Activated CD8-positive, alpha-beta T cell treated with anti-CD3 and anti-CD28 coated beads, Interleukin-2, amount 10 ng/mL, durations not matched to agents 7 days and 5 days (primary cell): ENCODE measurements at regions of chr11 and their contacts with region 1.

Region 1: GRCh38 chr11:128831174-128832120 is 35.6 kb downstream of the KCNJ1 start:
- DNase-seq: peak; percentile 91
- ATAC-seq: peak; percentile 85
- H3K4me3 Mint-ChIP-seq: peak overlapping the region; percentile 58
- H3K27ac Mint-ChIP-seq: peak overlapping the region; percentile 66
- H3K4me1 Mint-ChIP-seq: peaks cover 30% of the 10 kb centered on the region
- H3K27me3 Mint-ChIP-seq: peaks cover 2% of the 10 kb centered on the region

Region 2: DNA sequence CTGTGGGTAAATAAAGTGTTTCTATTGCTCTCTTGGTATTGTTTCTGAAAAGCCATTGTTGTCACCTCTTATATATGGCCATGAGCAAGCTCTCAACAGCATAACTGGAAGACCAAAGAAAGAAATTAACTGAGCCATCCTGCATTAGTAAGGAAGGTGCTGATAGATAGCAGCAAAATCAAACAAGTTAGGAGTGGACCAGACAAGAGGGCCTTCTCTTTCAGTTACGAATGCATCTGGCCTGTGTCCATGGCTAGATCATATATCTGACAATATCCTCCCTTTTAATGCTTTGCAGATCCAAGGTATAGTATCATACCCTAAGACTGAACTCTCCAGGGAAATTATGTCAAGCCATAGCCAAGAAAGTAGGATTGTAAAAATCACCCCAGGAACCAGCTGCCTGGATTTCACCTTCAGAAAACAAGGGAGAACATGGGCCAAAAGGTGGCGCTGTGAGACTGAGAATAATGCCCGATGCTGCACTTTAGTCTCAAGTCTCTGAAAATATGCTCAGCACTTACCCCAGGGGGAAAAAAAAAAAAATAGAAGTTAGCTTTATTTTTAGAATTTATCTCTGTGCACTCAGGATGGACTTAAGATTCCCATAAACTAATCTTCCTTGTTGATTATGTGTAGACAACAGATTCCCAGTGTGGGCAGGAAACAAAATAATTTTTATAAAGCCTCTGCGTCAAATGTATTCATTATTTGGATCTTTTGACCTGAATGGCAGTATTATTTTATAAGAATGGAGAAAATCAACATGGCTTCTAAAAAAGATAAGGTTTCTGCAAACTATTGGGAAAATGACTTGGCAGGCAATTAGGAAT is 659.2 kb before region 1 on chr11:
- CTCF ChIA-PET with region 1: interaction called, 52 read pairs
- POLR2A ChIA-PET with region 1: no interaction called
- DNase-seq: peak; percentile 91
- ATAC-seq: peak; percentile 86
- H3K4me3 Mint-ChIP-seq: no peak overlapping the region
- H3K27ac Mint-ChIP-seq: no peak overlapping the region
- H3K4me1 Mint-ChIP-seq: no peaks in the 10 kb centered on the region
- H3K27me3 Mint-ChIP-seq: peaks cover 11% of the 10 kb centered on the region

Region 3: DNA sequence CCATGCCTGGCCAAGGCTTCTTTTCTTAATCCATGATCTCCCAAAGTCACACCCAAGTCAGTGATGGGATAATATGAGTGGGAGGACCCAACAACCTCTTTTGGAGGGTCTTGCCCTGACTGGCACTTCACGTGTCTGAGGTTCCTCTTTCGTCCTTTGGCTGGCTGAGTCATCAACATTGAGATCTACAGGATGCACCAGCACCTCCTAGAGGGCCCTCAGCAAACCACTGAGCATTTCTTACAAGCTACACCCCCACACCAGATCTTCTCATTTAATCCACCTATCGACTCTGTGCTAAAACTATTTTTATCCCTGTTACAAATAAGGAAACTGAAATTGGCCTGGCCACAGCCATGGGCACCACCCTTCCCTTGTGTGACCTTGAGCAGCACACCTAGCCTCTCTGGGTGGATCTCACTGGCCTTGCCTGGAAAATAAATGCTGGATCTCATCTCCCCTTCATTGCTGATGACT is 74.2 kb before region 1 on chr11:
- CTCF ChIA-PET with region 1: interaction called, 20 read pairs
- POLR2A ChIA-PET with region 1: no interaction called
- DNase-seq: peak; percentile 84
- ATAC-seq: peak; percentile 91
- H3K4me3 Mint-ChIP-seq: no peak overlapping the region
- H3K27ac Mint-ChIP-seq: peak overlapping the region; percentile 87
- H3K4me1 Mint-ChIP-seq: peaks cover 76% of the 10 kb centered on the region
- H3K27me3 Mint-ChIP-seq: no peaks in the 10 kb centered on the region

Region 4: DNA sequence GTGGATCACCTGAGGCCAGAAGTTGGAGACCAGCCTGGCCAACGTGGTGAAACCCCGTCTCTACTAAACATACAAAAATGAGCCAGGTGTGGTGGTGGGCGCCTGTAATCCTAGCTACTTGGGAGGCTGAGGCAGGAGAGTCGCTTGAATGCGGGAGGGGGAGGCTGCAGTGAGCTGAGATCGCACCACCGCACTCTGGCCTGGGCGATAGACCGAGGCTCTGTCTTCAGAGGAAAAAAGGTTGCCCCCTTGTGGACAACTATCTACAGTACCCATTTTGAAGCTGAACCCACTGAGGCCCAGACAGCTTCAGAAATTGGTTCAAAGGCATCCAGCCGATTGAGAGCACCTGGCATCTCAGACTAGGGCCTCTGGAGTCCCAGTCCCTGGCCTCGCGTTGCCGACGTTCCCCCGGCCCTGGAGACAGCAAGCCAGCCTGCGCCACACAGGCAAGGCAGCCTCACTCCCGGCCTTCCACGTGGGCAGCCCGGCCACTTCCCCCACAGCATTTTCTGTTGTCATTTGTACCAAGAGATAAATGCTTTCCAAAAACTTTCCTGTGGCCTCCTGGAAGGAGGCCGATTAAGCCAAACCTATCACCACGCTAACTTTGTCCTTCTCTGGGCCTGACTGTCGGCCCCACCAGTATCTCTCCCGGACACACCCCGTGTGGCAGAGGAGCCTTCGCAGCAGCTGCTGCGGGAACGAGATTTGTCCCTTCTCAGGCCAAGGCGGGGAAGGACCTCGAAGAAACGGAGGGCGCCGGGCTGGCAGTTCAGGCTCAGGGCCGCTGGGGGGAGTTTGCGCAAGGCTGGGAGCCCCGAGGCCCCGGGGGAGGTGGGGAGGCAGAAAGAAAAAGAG is 54.8 kb before region 1 on chr11:
- CTCF ChIA-PET with region 1: interaction called, 13 read pairs
- POLR2A ChIA-PET with region 1: no interaction called
- DNase-seq: peak; percentile 38
- ATAC-seq: peak; percentile 52
- H3K4me3 Mint-ChIP-seq: no peak overlapping the region
- H3K27ac Mint-ChIP-seq: peak overlapping the region; percentile 45
- H3K4me1 Mint-ChIP-seq: peaks cover 43% of the 10 kb centered on the region
- H3K27me3 Mint-ChIP-seq: no peaks in the 10 kb centered on the region

Region 5: DNA sequence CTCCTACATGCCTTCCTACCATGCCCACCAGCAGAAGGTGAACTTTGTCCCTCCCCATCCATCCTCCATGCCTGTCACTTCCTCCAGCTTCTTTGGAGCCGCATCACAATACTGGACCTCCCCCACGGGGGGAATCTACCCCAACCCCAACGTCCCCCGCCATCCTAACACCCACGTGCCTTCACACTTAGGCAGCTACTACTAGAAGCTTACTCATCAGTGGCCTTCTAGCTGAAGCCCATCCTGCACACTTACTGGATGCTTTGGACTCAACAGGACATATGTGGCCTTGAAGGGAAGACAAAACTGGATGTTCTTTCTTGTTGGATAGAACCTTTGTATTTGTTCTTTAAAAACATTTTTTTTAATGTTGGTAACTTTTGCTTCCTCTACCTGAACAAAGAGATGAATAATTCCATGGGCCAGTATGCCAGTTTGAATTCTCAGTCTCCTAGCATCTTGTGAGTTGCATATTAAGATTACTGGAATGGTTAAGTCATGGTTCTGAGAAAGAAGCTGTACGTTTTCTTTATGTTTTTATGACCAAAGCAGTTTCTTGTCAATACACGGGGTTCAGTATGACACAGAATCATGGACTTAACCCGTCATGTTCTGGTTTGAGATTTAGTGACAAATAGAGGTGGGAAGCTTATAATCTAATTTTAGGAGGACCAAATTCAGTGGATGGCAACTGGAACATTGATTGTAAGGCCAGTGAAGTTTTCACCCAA is 20.5 kb before region 1 on chr11:
- CTCF ChIA-PET with region 1: interaction called, 12 read pairs
- POLR2A ChIA-PET with region 1: no interaction called
- DNase-seq: no peak
- ATAC-seq: no peak
- H3K4me3 Mint-ChIP-seq: no peak overlapping the region
- H3K27ac Mint-ChIP-seq: no peak overlapping the region
- H3K4me1 Mint-ChIP-seq: no peaks in the 10 kb centered on the region
- H3K27me3 Mint-ChIP-seq: no peaks in the 10 kb centered on the region

Region 6: GRCh38 chr11:128848815-128849455 is 17.5 kb after region 1 on chr11:
- CTCF ChIA-PET with region 1: interaction called, 45 read pairs
- POLR2A ChIA-PET with region 1: interaction called, 5 read pairs
- DNase-seq: peak; percentile 73
- ATAC-seq: peak; percentile 77
- H3K4me3 Mint-ChIP-seq: no peak overlapping the region
- H3K27ac Mint-ChIP-seq: no peak overlapping the region
- H3K4me1 Mint-ChIP-seq: peaks cover 23% of the 10 kb centered on the region
- H3K27me3 Mint-ChIP-seq: no peaks in the 10 kb centered on the region

Region 7: DNA sequence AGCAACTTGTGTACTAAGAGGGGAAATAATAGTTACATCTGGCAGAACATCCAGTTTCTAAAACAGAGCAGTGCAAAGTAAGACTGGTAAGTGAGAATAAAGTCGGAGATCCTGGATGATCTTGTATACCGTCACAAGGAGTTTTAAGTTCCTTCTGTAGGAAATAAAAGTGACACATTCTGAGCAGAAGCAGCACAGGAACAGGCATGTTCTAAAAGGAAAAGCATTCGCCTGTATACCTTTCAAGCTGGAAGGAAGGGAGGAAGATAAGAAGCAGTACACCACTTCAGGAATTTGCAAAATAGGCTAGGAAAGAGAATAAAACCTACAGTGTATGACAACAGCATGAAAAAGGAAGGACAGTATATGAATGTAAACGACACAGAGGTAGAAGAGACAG is 217.5 kb after region 1 on chr11:
- CTCF ChIA-PET with region 1: no interaction called
- POLR2A ChIA-PET with region 1: no interaction called
- DNase-seq: no peak
- ATAC-seq: no peak
- H3K4me3 Mint-ChIP-seq: no peak overlapping the region
- H3K27ac Mint-ChIP-seq: no peak overlapping the region
- H3K4me1 Mint-ChIP-seq: no peaks in the 10 kb centered on the region
- H3K27me3 Mint-ChIP-seq: no peaks in the 10 kb centered on the region